RWPE1 (cell line): ENCODE measurements at regions of chr5 and their contacts with region 1.

Region 1: DNA sequence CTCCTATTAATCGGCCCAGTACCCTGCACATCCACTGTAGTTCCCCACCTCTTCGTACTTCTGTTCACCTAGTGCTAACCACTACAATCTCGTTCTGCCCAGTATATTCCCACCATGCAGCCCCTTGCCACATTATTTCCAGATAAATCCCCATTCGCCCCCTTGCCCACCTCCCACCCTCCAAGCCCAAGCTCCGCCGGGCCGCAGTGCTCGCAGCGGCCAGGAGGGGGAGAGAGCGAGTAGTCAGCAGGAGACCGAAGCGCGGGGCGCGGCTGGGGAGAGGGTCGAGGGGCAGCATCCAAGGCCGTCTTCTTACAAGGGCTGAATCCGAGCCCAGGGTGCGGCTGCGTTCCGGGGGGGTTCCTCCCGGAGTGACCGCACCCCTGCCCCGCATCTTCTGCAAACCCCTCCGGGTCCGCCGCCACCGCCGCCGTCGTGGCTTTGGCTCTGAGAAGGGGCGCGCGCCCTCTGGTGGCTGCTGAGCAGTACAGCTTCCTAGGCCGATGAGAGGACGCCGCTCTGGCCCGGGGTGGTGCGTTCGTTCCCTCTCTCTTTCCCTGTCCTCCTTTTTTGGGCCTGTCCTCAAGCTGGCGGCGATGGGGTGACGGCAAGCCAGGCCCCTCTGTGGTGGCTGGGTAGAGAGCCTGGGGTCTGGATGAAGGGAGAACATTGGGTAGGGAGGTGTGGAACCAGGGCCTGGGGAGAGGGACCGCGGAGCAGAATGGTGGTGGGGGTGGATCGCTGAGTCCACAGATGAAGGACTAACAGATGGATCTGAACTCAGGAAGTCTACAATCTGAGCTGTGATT is 30.0 kb upstream of the PSD2 start:
- DNase-seq: peak; percentile 87
- H3K27ac ChIP-seq: no peak overlapping the region
- CTCF ChIP-seq: peak; percentile 100

Region 2: DNA sequence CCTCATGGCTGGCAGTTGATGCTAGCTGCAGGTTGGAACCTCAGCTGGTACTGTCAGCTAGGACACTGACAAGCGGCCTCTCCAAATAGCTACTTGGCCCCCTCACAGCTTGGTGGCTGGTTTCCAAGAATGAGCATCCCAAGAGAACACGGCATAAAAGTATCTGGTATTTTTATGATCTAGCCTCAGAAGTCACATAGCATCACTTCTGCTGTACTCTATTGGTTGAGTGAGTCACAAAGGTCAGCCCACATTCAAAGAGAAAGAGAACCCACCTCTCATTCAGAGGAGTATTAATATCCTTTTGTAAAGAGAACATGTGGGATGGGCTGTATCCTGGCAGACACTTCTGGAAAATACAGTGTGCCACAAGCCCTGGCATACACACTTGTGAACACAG is 561.4 kb before region 1 on chr5:
- CTCF ChIA-PET with region 1: no interaction called
- POLR2A ChIA-PET with region 1: no interaction called
- DNase-seq: no peak
- H3K27ac ChIP-seq: no peak overlapping the region
- CTCF ChIP-seq: no peak

Region 3: DNA sequence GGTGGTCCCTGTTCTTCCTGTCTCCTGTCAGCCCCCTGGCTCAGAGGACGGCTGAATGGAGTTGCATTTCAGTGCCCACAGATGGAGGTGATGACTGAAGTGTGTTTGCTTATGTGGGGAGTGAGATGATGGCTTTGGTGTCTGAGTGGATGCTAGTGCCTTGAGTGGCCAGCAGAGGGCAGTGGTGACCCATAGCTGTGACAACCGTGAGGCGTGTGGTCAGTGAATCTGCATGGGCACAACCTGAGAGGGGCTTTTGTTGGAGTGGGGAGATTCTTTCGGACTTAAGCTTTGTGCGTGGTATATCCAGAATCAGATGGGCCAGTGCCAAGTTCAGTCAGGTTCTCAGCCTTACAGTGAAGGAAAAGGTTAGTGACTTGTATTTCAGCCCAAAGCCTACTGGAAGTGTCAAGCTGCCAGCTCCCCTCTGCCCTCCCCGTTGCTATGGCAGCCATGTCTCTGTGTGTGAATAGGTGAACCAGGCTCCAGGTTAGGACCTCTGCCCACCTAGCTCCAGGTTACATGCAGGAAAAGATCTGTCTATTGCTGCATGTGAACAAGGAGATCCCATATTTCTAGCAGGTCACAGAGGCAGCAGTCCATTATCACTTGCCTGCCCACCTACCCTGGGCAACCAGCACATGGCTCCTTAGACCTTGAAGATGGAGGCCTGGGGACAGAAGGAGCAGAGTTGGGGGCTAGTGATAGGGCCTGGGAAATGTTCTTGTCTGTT is 132.2 kb before region 1 on chr5:
- CTCF ChIA-PET with region 1: interaction called, 161 read pairs
- POLR2A ChIA-PET with region 1: no interaction called
- DNase-seq: peak; percentile 84
- H3K27ac ChIP-seq: peak overlapping the region; percentile 16
- CTCF ChIP-seq: peak; percentile 99

Region 4: GRCh38 chr5:139651853-139652787 is 113.5 kb before region 1 on chr5:
- CTCF ChIA-PET with region 1: interaction called, 13 read pairs
- POLR2A ChIA-PET with region 1: no interaction called
- DNase-seq: peak; percentile 94
- H3K27ac ChIP-seq: peak overlapping the region; percentile 25; the same call in 1 of the 2 replicates
- CTCF ChIP-seq: no peak

Region 5: GRCh38 chr5:139668064-139668880 is 97.3 kb before region 1 on chr5:
- CTCF ChIA-PET with region 1: interaction called, 11 read pairs
- POLR2A ChIA-PET with region 1: no interaction called
- DNase-seq: peak; percentile 66
- H3K27ac ChIP-seq: peak overlapping the region; percentile 88
- CTCF ChIP-seq: no peak

Region 6: DNA sequence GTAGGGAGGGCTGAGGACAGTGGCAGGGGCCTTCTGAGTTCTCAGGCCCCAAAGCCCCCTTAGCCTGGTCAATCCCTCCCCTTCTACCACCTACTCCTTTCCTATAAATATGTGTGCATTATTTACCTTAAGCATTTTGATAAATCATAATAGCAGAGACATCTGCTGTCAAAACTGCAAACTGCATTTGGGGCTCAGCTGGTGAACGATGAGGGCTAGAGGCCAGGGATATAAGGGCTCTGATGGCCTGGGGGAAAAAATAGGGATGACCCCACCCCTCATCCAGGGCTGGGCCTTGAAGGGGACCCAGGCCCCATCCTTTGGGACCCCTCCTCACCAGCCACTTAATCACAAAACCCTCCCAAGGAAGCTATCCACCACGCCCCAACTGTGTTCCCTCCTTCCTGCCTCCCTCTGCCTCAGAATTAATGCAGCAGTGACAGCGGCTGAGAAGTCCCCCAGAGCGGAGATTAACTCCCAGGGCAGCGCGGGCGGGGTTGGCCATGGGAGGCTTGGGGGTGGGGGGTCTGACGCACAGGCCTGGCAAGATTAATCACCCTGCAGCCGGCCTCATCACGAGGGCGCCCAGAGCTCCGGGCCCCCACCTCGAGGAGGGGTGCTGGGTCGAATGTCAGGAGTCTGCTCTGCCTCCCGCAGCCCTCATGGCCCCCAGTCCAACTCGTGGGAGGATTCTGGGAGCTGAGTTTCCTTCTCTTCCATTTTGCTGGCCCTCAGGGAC is 75.4 kb before region 1 on chr5:
- CTCF ChIA-PET with region 1: interaction called, 31 read pairs
- POLR2A ChIA-PET with region 1: no interaction called
- DNase-seq: peak; percentile 67
- H3K27ac ChIP-seq: no peak overlapping the region
- CTCF ChIP-seq: peak; percentile 79

Region 7: DNA sequence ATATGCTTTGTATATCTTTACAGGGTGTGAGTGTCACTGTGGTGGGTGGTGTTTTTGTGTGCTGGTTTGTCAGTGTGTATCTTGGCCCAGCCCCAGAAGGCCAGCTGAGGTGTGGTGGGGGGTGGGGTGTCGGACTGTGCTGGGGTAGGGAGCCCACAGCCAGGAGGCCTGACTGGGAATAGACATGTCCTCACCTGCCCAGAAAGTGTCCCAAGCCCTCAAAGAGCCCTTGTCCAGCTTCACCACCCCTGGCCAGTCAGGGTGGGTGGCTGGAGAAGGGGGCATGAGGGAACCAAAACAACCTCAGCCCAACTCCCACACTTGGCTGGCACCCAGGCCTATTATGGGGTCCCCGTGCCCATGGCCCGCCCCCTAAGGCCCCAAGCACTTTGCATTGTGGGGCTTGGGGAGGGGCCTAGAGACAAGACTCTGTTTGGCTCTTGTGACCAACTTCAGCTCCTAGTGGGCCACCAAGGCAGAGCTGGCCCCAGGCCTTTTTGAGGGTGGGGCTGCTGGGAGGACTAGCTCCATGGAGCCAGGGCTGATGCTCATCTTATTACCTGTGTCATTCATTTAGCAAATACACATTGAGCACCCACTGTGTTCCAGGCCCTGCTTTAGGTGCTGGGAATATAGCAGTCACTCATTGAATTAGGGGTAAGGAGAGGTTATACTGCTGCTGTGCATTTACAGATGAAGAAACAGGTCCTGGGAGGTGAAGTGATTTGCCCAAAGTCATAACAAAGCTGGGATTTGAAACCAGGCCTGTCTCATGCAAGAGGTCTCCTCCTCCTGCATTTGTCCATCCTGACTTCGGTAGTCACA is 26.3 kb before region 1 on chr5:
- CTCF ChIA-PET with region 1: interaction called, 40 read pairs
- POLR2A ChIA-PET with region 1: no interaction called
- DNase-seq: no peak
- H3K27ac ChIP-seq: peak overlapping the region; percentile 14
- CTCF ChIP-seq: no peak

Region 8: DNA sequence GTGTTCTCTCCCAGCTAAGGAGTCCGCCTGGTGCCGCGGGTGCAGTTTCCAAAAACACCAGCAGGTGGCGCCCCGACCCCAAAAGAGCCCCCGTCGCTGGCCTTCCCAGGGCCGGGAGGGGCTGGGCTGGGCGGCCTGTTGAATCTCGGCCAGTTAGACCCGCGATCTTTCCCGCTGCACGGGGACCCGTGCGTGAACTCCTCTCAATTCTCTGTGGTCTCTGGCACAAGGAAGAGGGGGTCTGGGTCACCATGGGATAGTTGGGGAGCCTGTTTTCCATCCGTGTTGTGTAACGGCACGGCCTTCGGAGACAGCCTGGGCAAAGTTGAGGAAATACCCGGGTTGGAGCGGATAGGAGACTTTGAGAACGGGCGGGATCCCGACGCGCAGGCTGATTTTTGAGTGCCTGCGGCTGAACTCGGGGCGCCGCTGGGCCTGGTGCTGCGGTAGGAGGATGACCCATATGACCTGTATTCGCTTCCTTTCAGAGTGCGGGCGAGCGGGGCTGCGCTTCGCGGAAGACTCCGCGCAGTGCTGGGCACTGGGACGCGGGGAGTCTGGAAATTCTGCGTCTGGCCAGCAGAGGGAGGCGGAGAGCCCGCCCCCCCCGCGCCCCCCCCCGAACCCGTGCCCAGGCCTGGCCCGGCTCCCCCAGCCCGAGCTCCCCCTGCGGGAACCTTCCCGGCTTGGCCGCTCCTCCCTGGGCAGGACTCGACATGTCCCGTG is 22.1 kb after region 1 on chr5:
- CTCF ChIA-PET with region 1: interaction called, 15 read pairs
- POLR2A ChIA-PET with region 1: no interaction called
- DNase-seq: peak; percentile 97
- H3K27ac ChIP-seq: peak overlapping the region; percentile 57
- CTCF ChIP-seq: peak; percentile 96